ENCODE measurements at regions of chr4 and their contacts with region 1.

Region 1: DNA sequence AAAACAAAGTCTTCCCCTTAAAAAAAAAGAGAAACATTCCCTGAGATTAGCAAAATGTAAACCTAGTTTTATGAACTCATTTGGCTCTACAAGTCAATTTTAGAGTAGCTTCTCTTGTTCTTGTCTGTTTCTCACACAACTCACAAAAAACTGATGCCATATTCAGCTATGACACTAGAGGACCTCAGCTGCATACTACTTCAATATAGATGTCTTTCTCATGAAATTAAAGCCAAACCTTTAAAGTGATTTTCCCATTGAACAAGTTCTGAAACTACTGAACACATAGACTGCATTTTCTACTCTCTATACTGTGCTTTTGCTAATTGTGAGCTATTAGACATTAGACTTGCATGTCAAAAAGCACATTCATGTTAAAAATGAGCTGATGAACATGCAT is 49.8 kb downstream of the TBCK start:
- DNase-seq: no peak
- H3K4me3 Mint-ChIP-seq: no peak overlapping the region
- H3K27ac Mint-ChIP-seq: no peak overlapping the region
- H3K4me1 Mint-ChIP-seq: peaks cover 2% of the 10 kb centered on the region
- H3K27me3 Mint-ChIP-seq: no peaks in the 10 kb centered on the region

Region 2: GRCh38 chr4:105784761-105785160 is 481.4 kb before region 1 on chr4:
- intact Hi-C with region 1: no loop called
- DNase-seq: no peak
- H3K4me3 Mint-ChIP-seq: no peak overlapping the region
- H3K27ac Mint-ChIP-seq: no peak overlapping the region
- H3K4me1 Mint-ChIP-seq: no peaks in the 10 kb centered on the region
- H3K27me3 Mint-ChIP-seq: no peaks in the 10 kb centered on the region

Region 3: DNA sequence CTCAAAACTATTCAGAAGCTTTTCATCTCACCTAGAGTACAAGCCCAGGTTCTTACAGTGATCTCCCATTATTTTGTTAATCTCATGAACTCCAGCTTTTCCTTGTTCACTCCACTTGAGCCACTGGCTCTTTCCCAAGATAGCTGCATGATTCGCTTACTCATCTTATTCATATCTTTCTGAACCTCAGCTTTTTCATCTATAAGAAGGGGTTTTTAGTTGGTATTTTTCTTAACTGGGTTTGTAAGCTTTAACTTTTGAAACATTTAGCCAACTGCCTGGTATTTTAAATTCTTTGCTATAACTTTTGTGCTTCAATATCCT is 78.4 kb after region 1 on chr4:
- intact Hi-C with region 1: no loop called
- DNase-seq: no peak
- H3K4me3 Mint-ChIP-seq: no peak overlapping the region
- H3K27ac Mint-ChIP-seq: no peak overlapping the region
- H3K4me1 Mint-ChIP-seq: peaks cover 30% of the 10 kb centered on the region
- H3K27me3 Mint-ChIP-seq: no peaks in the 10 kb centered on the region

Region 4: GRCh38 chr4:106898621-106899230 is 632.5 kb after region 1 on chr4:
- intact Hi-C with region 1: loop called (anchors 10 kb)
- DNase-seq: no peak
- H3K4me3 Mint-ChIP-seq: no peak overlapping the region
- H3K27ac Mint-ChIP-seq: no peak overlapping the region
- H3K4me1 Mint-ChIP-seq: no peaks in the 10 kb centered on the region
- H3K27me3 Mint-ChIP-seq: no peaks in the 10 kb centered on the region